MCF 10A (cell line): ENCODE measurements at regions of chr2 and their contacts with region 1.

Region 1: GRCh38 chr2:68121873-68122679 is 35.6 kb upstream of the PNO1 start:
- DNase-seq: peak; percentile 84
- H3K4me3 Mint-ChIP-seq: no peak overlapping the region
- H3K27ac Mint-ChIP-seq: no peak overlapping the region
- H3K4me1 Mint-ChIP-seq: peaks cover 5% of the 10 kb centered on the region
- H3K27me3 Mint-ChIP-seq: no peaks in the 10 kb centered on the region
- CTCF ChIP-seq: peak; percentile 97

Region 2: GRCh38 chr2:68141875-68142274 is 19.8 kb after region 1 on chr2:
- CTCF ChIA-PET with region 1: interaction called, 10 read pairs
- POLR2A ChIA-PET with region 1: no interaction called
- intact Hi-C with region 1: no loop called
- DNase-seq: no peak
- H3K4me3 Mint-ChIP-seq: no peak overlapping the region
- H3K27ac Mint-ChIP-seq: no peak overlapping the region
- H3K4me1 Mint-ChIP-seq: no peaks in the 10 kb centered on the region
- H3K27me3 Mint-ChIP-seq: no peaks in the 10 kb centered on the region
- CTCF ChIP-seq: no peak

Region 3: DNA sequence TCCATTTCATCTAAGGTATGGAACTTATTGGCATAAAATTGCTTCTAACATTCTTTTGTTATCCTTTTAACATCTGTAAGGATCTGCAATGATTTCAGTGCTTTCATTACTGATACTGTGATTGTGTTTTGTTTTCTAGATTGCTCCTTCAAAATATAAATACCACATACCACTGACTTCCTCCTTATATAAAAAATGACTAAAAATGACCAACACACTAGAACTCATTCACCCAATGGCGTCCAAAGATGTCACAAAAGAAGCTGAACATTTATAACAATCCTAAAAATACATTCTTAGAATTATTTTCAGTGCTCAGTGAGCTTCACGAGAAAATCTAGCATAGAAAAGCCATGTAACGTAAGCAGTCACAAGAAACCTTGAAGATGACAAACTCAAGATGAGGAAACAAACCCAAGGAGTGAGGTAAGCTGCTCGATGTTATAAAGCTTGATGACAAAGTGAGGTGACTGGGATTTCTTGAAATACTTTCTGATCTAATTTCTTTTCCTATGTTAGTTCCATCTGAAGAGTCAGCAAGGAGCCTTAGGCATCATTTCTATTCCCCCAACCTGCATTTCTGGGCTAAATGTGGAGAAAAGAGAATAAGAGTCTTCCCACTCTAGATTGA is 78.2 kb after region 1 on chr2:
- CTCF ChIA-PET with region 1: no interaction called
- POLR2A ChIA-PET with region 1: no interaction called
- intact Hi-C with region 1: no loop called
- DNase-seq: no peak
- H3K4me3 Mint-ChIP-seq: no peak overlapping the region
- H3K27ac Mint-ChIP-seq: no peak overlapping the region
- H3K4me1 Mint-ChIP-seq: peaks cover 5% of the 10 kb centered on the region
- H3K27me3 Mint-ChIP-seq: no peaks in the 10 kb centered on the region
- CTCF ChIP-seq: no peak

Region 4: DNA sequence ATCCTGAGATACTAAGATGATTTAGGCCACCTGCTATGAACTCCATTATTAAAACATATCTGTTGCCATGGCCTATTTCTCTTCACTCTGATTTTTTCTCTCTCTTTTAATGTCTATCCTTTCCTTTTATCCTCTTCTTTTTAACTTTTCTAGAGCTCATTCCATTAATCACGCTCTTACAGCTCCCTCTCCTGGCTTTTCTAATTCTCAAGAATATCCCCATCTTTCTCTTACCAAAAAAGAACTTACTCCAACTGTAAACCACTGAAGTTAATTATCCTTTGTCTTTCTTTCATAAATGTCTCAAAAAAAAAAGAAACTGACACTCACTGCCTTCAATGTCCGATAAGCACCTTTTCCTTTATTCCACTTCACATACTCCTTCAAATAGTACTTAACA is 122.4 kb after region 1 on chr2:
- CTCF ChIA-PET with region 1: no interaction called
- POLR2A ChIA-PET with region 1: no interaction called
- intact Hi-C with region 1: loop called (anchors 1 kb)
- DNase-seq: no peak
- H3K4me3 Mint-ChIP-seq: no peak overlapping the region
- H3K27ac Mint-ChIP-seq: no peak overlapping the region
- H3K4me1 Mint-ChIP-seq: peaks cover 14% of the 10 kb centered on the region
- H3K27me3 Mint-ChIP-seq: no peaks in the 10 kb centered on the region
- CTCF ChIP-seq: no peak

Region 5: GRCh38 chr2:68290901-68291300 is 168.8 kb after region 1 on chr2:
- CTCF ChIA-PET with region 1: interaction called, 161 read pairs
- POLR2A ChIA-PET with region 1: interaction called, 17 read pairs
- intact Hi-C with region 1: loop called (anchors 1 kb)
- DNase-seq: no peak
- H3K4me3 Mint-ChIP-seq: no peak overlapping the region
- H3K27ac Mint-ChIP-seq: no peak overlapping the region
- H3K4me1 Mint-ChIP-seq: peaks cover 10% of the 10 kb centered on the region
- H3K27me3 Mint-ChIP-seq: no peaks in the 10 kb centered on the region
- CTCF ChIP-seq: no peak

Region 6: GRCh38 chr2:68441179-68441993 is 319.3 kb after region 1 on chr2:
- CTCF ChIA-PET with region 1: interaction called, 23 read pairs
- POLR2A ChIA-PET with region 1: no interaction called
- intact Hi-C with region 1: loop called (anchors 1 kb)
- DNase-seq: peak; percentile 92
- H3K4me3 Mint-ChIP-seq: no peak overlapping the region
- H3K27ac Mint-ChIP-seq: no peak overlapping the region
- H3K4me1 Mint-ChIP-seq: no peaks in the 10 kb centered on the region
- H3K27me3 Mint-ChIP-seq: no peaks in the 10 kb centered on the region
- CTCF ChIP-seq: peak; percentile 88